Heart right ventricle (tissue), 16 donors: ENCODE measurements at regions of chr4 and their contacts with region 1.

Region 1: DNA sequence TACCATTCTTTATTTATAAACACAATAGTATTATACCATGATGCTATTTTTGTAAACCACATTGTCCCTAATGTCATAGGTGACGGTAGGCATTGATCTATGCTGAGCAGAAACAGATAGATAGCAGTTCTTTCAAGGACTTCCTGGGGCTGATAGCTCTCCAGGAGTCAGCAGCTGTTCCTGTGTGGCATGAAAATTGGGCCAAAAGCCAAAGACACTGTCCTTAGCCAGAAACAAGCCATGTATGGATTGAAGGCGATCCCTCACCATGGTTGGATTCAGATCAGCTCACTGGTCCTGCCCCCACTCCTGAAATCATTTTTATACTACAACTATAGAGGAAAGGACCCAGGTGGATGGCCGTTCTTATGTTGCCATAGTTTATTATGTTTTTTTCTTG is 53.6 kb downstream of the DDX60 start:
- DNase-seq: peak in 1 of 2 donors; percentile 70
- ATAC-seq: peak; percentile 75 to 95 (median 94)
- H3K4me3 ChIP-seq: no peak overlapping the region
- H3K27ac ChIP-seq: peak overlapping the region in 9 of 10 donors; percentile 47 to 82 (median 74)
- H3K4me1 ChIP-seq: peaks cover 0 to 13% (median 3%) of the 10 kb centered on the region in 9 donors
- H3K27me3 ChIP-seq: no peaks in the 10 kb centered on the region
- CTCF ChIP-seq: no peak

Region 2: DNA sequence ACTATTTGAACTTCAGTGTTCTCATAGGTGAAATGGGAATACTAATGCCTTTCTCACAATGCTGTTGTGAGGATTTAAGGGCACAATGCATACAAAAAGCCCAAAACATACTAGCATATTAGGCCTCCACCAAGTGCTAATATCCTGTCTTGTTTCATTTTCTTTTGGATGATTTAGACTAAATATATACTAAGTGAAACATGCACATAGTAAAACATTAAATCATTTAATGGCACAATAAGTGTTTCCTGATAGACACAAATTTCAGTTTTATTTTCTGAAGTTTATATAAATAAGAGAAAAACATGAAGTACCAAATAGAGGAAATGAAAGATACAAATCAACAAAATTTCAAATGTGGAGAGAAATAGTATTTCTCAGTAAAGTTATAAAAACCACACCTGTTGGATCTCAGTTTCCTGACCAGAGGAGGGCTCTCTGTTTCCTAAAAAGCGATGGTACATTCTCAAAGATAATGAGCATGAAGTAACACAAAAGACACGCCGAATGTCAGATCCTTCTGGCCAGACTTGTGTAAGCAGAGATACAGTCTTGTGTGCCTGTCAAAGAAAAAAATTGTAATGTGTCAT is 28.6 kb after region 1 on chr4:
- intact Hi-C with region 1: no loop called
- DNase-seq: no peak
- ATAC-seq: no peak
- H3K4me3 ChIP-seq: no peak overlapping the region
- H3K27ac ChIP-seq: no peak overlapping the region
- H3K4me1 ChIP-seq: no peaks in the 10 kb centered on the region
- H3K27me3 ChIP-seq: no peaks in the 10 kb centered on the region
- CTCF ChIP-seq: no peak

Region 3: DNA sequence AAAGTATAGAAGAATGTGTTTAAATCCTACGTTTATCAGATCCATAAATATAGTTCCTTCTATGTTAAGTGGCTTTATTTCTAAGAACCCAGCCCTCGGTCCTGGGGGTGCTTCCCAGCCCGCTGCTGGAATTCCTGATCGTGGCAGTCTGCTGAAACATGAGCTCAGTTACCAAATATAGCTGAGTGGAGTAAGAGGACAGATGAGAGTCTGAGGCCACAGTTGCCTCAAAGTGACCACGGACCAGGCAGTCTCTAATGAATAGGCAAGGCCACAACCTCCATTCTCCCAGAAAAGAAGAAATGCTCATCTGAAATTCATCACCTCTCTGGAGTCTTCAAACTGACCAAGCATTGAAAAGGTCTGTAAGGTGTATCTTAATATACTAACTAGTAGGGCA is 231.9 kb after region 1 on chr4 and contains the start of gene PALLD:
- intact Hi-C with region 1: loop called in 2 of 10 experiments (anchors 5 to 10 kb)
- DNase-seq: peak; percentile 35 to 61
- ATAC-seq: peak; percentile 89 to 96 (median 93)
- H3K4me3 ChIP-seq: peak within 1 kb of the TSS; percentile 18 to 58 (median 40)
- H3K27ac ChIP-seq: peak within 1 kb of the TSS; percentile 7 to 89 (median 78)
- H3K4me1 ChIP-seq: no peaks in the 10 kb centered on the region
- H3K27me3 ChIP-seq: no peaks in the 10 kb centered on the region
- CTCF ChIP-seq: no peak
- total RNA-seq, gene PALLD: 588 to 1,537 (median 701) TPM

Region 4: GRCh38 chr4:168694648-168695047 is 429.7 kb after region 1 on chr4:
- intact Hi-C with region 1: loop called in 1 of 10 experiments (anchors 10 kb)
- DNase-seq: no peak
- ATAC-seq: peak in 6 of 8 donors; percentile 48 to 65 (median 64)
- H3K4me3 ChIP-seq: no peak overlapping the region
- H3K27ac ChIP-seq: peak overlapping the region in 6 of 10 donors; percentile 3 to 75 (median 56)
- H3K4me1 ChIP-seq: peaks cover 0 to 28% (median 6%) of the 10 kb centered on the region in 9 donors
- H3K27me3 ChIP-seq: no peaks in the 10 kb centered on the region
- CTCF ChIP-seq: no peak